Heart right ventricle (tissue), 16 donors: ENCODE measurements at regions of chr12 and their contacts with region 1.

Region 1: DNA sequence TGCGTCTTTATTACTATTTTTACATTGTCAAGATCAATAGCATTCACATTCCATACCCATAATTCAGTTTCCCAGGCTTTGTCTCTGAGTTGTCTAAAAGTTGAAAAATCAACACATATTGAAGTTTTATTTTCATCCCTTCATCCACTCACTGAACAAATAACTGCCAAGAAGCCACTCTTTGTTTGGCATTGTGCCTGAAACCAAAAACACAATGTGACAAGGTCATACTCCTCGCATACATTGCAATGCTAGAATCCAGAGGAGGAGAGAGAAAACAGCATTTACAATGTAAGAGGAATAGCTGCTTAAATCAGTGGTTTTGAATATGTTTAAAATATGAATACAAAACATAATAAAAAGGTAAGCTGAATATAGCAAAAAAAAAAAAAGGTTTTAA is 71.8 kb downstream of the CCDC60 start:
- DNase-seq: no peak
- ATAC-seq: no peak
- H3K4me3 ChIP-seq: no peak overlapping the region
- H3K27ac ChIP-seq: peak overlapping the region in 3 of 10 donors; percentile 22 to 49 (median 27)
- H3K4me1 ChIP-seq: peaks cover 0 to 9% (median 0%) of the 10 kb centered on the region in 9 donors
- H3K27me3 ChIP-seq: no peaks in the 10 kb centered on the region
- CTCF ChIP-seq: no peak

Region 2: GRCh38 chr12:117749431-117749830 is 1656.9 kb before region 1 on chr12:
- intact Hi-C with region 1: no loop called
- DNase-seq: no peak
- ATAC-seq: no peak
- H3K4me3 ChIP-seq: no peak overlapping the region
- H3K27ac ChIP-seq: no peak overlapping the region
- H3K4me1 ChIP-seq: no peaks in the 10 kb centered on the region
- H3K27me3 ChIP-seq: peaks cover 0 to 7% (median 0%) of the 10 kb centered on the region in 7 donors
- CTCF ChIP-seq: no peak

Region 3: GRCh38 chr12:119328111-119328510 is 78.2 kb before region 1 on chr12:
- intact Hi-C with region 1: loop called in 7 of 10 experiments (anchors 5 to 10 kb)
- DNase-seq: peak; percentile 8 to 42
- ATAC-seq: peak; percentile 69 to 90 (median 82)
- H3K4me3 ChIP-seq: no peak overlapping the region
- H3K27ac ChIP-seq: no peak overlapping the region
- H3K4me1 ChIP-seq: peaks cover 0 to 16% (median 6%) of the 10 kb centered on the region in 9 donors
- H3K27me3 ChIP-seq: no peaks in the 10 kb centered on the region
- CTCF ChIP-seq: peak; percentile 14 to 61 (median 53)

Region 4: DNA sequence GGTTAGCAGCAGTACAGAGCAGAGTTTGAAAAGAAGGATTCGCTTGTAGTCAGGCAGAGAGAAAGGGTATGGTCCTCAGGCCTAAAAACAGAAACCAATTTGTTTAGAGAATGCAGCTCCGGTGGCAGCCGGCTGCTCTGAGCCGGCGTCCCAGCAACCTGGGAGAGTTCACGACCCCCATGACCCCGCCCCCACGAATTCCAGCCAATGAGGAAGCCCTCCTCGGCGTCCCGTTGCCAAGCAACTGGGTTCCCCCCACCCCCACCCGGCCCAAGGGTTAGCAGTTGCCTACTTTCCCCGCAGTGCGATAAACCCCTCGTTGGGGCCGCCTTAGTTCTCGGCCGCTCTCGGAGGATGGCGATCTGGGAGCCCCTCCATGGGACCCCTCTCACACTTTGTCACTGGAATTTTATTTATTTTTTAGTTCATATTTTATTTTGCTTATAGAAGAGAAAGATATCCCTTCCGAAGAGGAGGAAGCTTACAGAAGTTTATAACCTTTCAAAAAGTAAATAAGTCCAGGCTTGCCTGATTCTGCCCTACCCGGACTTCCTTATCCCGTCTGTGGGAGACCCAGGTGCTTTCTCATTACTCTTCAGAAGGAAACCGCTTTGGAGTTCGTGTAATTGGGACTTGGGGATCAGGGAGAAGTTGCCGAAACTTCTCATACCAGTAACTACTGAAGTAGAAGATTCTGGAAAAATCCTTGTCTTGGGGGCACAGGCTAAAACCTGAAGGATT is 71.7 kb before region 1 on chr12 and contains the start of gene CCDC60:
- intact Hi-C with region 1: loop called in 7 of 10 experiments (anchors 5 to 10 kb)
- DNase-seq: no peak
- ATAC-seq: no peak
- H3K4me3 ChIP-seq: no peak within 1 kb of the TSS
- H3K27ac ChIP-seq: no peak within 1 kb of the TSS
- H3K4me1 ChIP-seq: no peaks in the 10 kb centered on the region
- H3K27me3 ChIP-seq: peaks cover 0 to 22% (median 5%) of the 10 kb centered on the region in 7 donors
- CTCF ChIP-seq: no peak
- total RNA-seq, gene CCDC60: not detected

Region 5: DNA sequence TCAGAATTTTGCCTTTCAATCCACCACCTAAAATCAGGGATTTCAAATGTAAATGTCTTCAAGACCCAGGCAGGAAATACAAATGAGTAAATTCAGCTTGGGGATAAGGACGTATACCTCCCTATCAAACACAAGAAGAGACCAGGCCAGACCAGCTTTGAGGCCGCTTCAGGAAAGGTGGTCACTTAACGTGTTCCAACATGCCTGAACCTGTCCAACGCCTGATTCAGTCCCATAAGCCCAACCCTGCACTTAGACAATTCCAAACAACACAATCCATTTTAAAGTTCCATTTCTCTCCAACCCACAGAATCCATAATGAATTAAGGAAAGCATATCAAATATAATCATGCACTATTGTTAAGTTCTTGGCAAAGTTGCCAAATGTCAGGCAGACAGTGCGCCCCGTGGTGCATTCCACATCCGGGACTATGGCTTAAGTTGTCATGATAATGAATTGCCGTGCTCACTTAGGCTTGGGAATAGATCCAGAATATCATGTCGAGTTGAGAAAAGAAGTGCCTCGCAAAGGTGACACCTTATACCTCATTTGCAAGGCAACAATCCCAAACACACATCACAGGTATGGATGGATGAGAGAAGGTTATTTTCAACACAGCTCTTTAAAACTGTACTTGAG is 36.3 kb before region 1 on chr12:
- intact Hi-C with region 1: loop called in 1 of 10 experiments (anchors 5 kb)
- DNase-seq: no peak
- ATAC-seq: no peak
- H3K4me3 ChIP-seq: no peak overlapping the region
- H3K27ac ChIP-seq: no peak overlapping the region
- H3K4me1 ChIP-seq: peaks cover 0 to 38% (median 15%) of the 10 kb centered on the region in 9 donors
- H3K27me3 ChIP-seq: no peaks in the 10 kb centered on the region
- CTCF ChIP-seq: no peak